RWPE1 (cell line): ENCODE measurements at regions of chr10 and their contacts with region 1.

Region 1: DNA sequence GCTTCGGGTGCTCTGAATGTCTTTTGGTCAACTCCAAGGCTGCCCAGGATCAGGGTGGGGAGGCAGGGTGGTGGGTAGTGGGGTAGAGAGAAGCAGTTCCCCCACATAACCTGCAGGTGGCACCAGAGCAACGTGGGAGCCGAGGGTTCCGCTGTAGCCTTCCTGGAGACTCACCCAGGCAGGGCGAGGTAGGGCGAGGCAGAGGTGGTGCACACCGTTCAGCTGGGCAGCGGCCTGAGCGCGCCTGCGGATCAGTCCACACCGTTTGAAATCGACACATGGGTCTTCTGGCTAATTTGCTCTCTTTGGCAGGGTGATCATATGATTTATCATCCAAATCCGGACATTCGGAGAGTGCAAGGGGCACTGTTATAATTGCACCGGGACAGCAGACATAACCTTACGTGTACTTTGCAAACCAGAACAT is 41.4 kb upstream of the MAP3K8 start:
- DNase-seq: peak; percentile 82
- H3K27ac ChIP-seq: no peak overlapping the region
- CTCF ChIP-seq: peak; percentile 94

Region 2: GRCh38 chr10:30227481-30227880 is 165.1 kb before region 1 on chr10:
- CTCF ChIA-PET with region 1: no interaction called
- POLR2A ChIA-PET with region 1: no interaction called
- DNase-seq: no peak
- H3K27ac ChIP-seq: no peak overlapping the region
- CTCF ChIP-seq: no peak

Region 3: GRCh38 chr10:30404540-30404939 is 12.0 kb after region 1 on chr10:
- CTCF ChIA-PET with region 1: interaction called, 12 read pairs
- POLR2A ChIA-PET with region 1: no interaction called
- DNase-seq: no peak
- H3K27ac ChIP-seq: no peak overlapping the region
- CTCF ChIP-seq: no peak